Caco-2 (cell line): ENCODE measurements at regions of chr17 and their contacts with region 1.

Region 1: DNA sequence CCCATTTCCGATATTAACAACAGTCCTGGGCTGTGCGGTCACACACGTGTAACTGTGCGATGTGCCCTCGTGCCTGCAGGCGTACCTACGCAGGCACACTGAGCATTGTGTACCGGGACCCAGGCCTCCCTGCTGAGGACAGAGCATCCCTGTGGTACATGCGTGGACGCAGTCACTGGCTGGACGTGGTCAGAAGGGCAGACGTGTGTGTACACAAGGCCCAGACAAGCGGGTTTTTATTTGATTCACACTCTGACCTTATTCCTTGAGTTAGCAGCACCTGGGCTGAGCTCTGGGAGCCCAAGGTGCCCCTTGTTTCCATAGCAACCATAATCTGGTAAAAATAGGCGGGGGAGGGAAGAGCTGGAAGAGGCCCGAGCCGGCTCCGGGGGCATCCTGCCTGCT is 19.5 kb downstream of the RAP1GAP2 start:
- DNase-seq: peak; percentile 81
- H3K4me3 ChIP-seq: no peak overlapping the region
- H3K4me3 Mint-ChIP-seq: no peak overlapping the region
- H3K27ac Mint-ChIP-seq: peak overlapping the region; percentile 18
- H3K4me1 ChIP-seq: no peaks in the 10 kb centered on the region
- H3K4me1 Mint-ChIP-seq: peaks cover 7% of the 10 kb centered on the region
- H3K27me3 ChIP-seq: no peaks in the 10 kb centered on the region
- H3K27me3 Mint-ChIP-seq: no peaks in the 10 kb centered on the region
- CTCF ChIP-seq: no peak

Region 2: DNA sequence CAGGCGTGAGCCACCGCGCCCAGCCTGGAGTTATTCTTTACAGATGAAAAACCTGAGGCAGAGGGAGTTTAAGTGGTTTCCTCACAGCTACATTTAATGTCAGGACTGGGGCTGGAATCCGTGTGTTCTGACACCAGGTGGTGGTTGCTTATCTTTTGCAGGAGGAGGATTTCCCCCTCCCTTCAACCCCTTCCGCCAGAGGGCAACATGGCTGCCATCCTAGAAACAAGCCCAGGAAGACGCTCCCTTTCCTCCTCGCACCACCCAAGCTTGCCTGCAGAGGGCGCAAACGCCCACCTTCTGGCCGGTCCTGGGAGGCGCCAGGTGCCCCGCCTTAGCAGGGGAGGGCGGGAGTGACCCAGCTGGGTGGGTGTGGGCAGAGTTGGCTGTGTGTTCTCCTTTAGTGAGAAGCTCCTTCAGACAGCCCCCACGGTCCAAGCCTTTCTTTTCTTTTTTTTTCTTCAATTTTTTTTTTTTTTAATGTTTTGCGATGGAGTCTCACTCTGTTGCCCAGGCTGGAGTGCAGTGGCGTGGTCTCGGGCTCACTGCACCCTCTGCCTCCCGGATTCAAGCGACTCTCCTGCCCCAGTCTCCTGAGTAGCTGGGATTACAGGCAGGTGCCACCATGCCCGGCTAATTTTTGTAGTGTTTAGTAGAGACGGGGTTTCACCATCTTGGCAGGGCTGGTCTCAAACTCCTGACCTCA is 29.5 kb before region 1 on chr17:
- CTCF ChIA-PET with region 1: interaction called, 3 read pairs
- POLR2A ChIA-PET with region 1: no interaction called
- intact Hi-C with region 1: loop called (anchors 2 kb)
- DNase-seq: peak; percentile 95 to 98
- H3K4me3 ChIP-seq: no peak overlapping the region
- H3K4me3 Mint-ChIP-seq: no peak overlapping the region
- H3K27ac Mint-ChIP-seq: no peak overlapping the region
- H3K4me1 ChIP-seq: peaks cover 4% of the 10 kb centered on the region; the same call in 1 of the 2 replicates
- H3K4me1 Mint-ChIP-seq: peaks cover 6% of the 10 kb centered on the region
- H3K27me3 ChIP-seq: no peaks in the 10 kb centered on the region
- H3K27me3 Mint-ChIP-seq: no peaks in the 10 kb centered on the region
- CTCF ChIP-seq: peak; percentile 94 to 96

Region 3: DNA sequence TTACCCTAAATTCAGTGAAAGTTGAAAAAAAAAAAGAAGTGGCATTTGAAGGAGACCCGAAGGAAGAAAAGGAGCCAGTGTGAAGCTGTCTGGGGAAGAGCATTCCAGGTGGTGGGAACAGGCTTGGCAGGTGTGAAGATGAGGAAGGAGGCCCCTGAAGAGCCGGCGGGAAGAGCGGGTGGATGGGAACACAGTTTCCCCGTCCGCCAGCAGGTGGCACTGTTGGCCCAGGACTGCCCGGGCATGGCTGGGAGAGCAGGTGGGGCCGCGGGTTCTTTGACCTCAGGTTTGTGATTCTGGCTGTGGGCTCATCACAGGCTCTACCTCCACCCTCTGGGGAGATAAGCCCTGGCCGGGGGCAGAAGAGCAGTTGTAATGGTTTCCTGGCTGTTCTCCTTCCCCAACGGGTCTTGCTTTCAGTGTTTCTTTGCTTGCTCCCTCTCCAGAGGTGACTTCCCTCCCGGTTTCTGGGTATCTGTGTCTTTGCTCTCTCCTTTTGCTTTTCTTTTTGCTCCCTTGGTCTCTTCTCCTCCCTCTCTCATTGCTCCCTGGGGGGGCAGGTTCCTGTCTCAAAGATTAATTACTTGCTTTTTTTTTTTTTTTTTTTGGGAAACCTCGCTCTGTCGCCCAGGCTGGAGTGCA is 12.7 kb after region 1 on chr17:
- CTCF ChIA-PET with region 1: no interaction called
- POLR2A ChIA-PET with region 1: no interaction called
- intact Hi-C with region 1: no loop called
- DNase-seq: peak; percentile 90 to 94
- H3K4me3 ChIP-seq: no peak overlapping the region
- H3K4me3 Mint-ChIP-seq: no peak overlapping the region
- H3K27ac Mint-ChIP-seq: no peak overlapping the region
- H3K4me1 ChIP-seq: peaks cover 5% of the 10 kb centered on the region
- H3K4me1 Mint-ChIP-seq: peaks cover 11% of the 10 kb centered on the region
- H3K27me3 ChIP-seq: no peaks in the 10 kb centered on the region
- H3K27me3 Mint-ChIP-seq: no peaks in the 10 kb centered on the region
- CTCF ChIP-seq: peak; percentile 96 to 97

Region 4: GRCh38 chr17:3127451-3127850 is 311.7 kb after region 1 on chr17 and contains the start of gene OR1G1:
- CTCF ChIA-PET with region 1: no interaction called
- POLR2A ChIA-PET with region 1: no interaction called
- intact Hi-C with region 1: no loop called
- DNase-seq: no peak
- H3K4me3 ChIP-seq: no peak within 1 kb of the TSS
- H3K4me3 Mint-ChIP-seq: no peak within 1 kb of the TSS
- H3K27ac Mint-ChIP-seq: no peak within 1 kb of the TSS
- H3K4me1 ChIP-seq: no peaks in the 10 kb centered on the region
- H3K4me1 Mint-ChIP-seq: no peaks in the 10 kb centered on the region
- H3K27me3 ChIP-seq: no peaks in the 10 kb centered on the region; the same call in none of the 2 replicates
- H3K27me3 Mint-ChIP-seq: peaks cover 23% of the 10 kb centered on the region
- CTCF ChIP-seq: no peak
- total RNA-seq, gene OR1G1: not detected in 2 replicates